PC-9 (cell line): ENCODE measurements at regions of chr6 and their contacts with region 1.

Region 1: GRCh38 chr6:18264219-18264922 is at the start of gene DEK:
- DNase-seq: peak; percentile 56 to 84
- H3K4me3 ChIP-seq: peak within 1 kb of the TSS; percentile 97
- H3K27ac ChIP-seq: peak within 1 kb of the TSS; percentile 73
- H3K4me1 ChIP-seq: peaks cover 41% of the 10 kb centered on the region
- H3K27me3 ChIP-seq: no peaks in the 10 kb centered on the region
- CTCF ChIP-seq: peak; percentile 53; the same call in 1 of the 2 replicates
- total RNA-seq, gene DEK: 192 and 260 TPM in 2 replicates

Region 2: DNA sequence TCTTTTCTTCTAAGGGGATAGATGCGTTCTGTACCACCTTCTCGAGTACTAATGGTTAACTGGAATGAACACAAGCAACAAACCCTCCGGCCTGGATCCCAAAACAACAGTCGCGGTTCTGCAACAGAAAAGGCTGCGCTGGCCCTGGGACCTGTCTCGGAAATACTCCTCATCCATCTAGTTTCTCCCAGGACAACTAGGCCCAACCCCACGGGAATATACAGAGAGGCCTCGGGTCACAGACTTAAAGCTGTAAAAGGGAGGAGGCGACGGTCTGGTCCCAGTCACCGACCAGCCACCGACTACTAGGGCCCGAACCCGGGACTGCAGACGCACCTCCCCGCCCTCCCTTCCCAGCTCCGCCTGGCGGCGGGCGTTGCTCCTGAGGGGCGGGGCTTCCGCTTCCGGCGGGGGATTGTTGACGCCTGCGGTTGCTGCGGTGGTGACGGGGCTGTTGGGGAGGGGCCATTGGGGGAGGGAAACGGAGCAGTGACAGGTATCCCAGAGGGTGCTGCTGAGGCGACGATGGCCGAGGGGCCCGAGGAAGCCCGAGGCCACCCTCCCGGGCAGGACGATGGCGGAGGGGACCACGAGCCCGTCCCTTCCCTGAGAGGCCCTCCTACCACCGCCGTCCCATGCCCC is 664.4 kb before region 1 on chr6 and contains the start of gene FAM8A1:
- CTCF ChIA-PET with region 1: no interaction called
- POLR2A ChIA-PET with region 1: interaction called, 10 read pairs
- intact Hi-C with region 1: no loop called
- DNase-seq: peak; percentile 76 to 95
- H3K4me3 ChIP-seq: peak within 1 kb of the TSS; percentile 80
- H3K27ac ChIP-seq: no peak within 1 kb of the TSS
- H3K4me1 ChIP-seq: peaks cover 11% of the 10 kb centered on the region; the same call in 1 of the 2 replicates
- H3K27me3 ChIP-seq: no peaks in the 10 kb centered on the region
- CTCF ChIP-seq: no peak; the same call in 1 of the 2 replicates
- total RNA-seq, gene FAM8A1: 8.1 and 11.9 TPM in 2 replicates

Region 3: GRCh38 chr6:18302561-18303439 is 38.4 kb after region 1 on chr6:
- CTCF ChIA-PET with region 1: no interaction called
- POLR2A ChIA-PET with region 1: no interaction called
- intact Hi-C with region 1: loop called (anchors 2 kb)
- DNase-seq: no peak
- H3K4me3 ChIP-seq: no peak overlapping the region
- H3K27ac ChIP-seq: no peak overlapping the region
- H3K4me1 ChIP-seq: no peaks in the 10 kb centered on the region; the same call in 1 of the 2 replicates
- H3K27me3 ChIP-seq: no peaks in the 10 kb centered on the region
- CTCF ChIP-seq: no peak; the same call in 1 of the 2 replicates

Region 4: GRCh38 chr6:18387061-18387721 is 122.8 kb after region 1 on chr6 and contains the start of gene RNF144B:
- CTCF ChIA-PET with region 1: no interaction called
- POLR2A ChIA-PET with region 1: interaction called, 16 read pairs
- intact Hi-C with region 1: loop called (anchors 1 kb)
- DNase-seq: peak; percentile 87 to 89
- H3K4me3 ChIP-seq: peak within 1 kb of the TSS; percentile 80
- H3K27ac ChIP-seq: peak within 1 kb of the TSS; percentile 76
- H3K4me1 ChIP-seq: peaks cover 39% of the 10 kb centered on the region
- H3K27me3 ChIP-seq: no peaks in the 10 kb centered on the region
- CTCF ChIP-seq: no peak
- total RNA-seq, gene RNF144B: 26.2 and 34.5 TPM in 2 replicates

Region 5: GRCh38 chr6:18491308-18492045 is 227.1 kb after region 1 on chr6:
- CTCF ChIA-PET with region 1: no interaction called
- POLR2A ChIA-PET with region 1: no interaction called
- intact Hi-C with region 1: loop called (anchors 2 kb)
- DNase-seq: peak; percentile 33 to 76
- H3K4me3 ChIP-seq: no peak overlapping the region
- H3K27ac ChIP-seq: no peak overlapping the region
- H3K4me1 ChIP-seq: peaks cover 42% of the 10 kb centered on the region
- H3K27me3 ChIP-seq: no peaks in the 10 kb centered on the region
- CTCF ChIP-seq: no peak

Region 6: GRCh38 chr6:18509871-18510643 is 245.7 kb after region 1 on chr6:
- CTCF ChIA-PET with region 1: no interaction called
- POLR2A ChIA-PET with region 1: no interaction called
- intact Hi-C with region 1: no loop called
- DNase-seq: no peak
- H3K4me3 ChIP-seq: no peak overlapping the region
- H3K27ac ChIP-seq: no peak overlapping the region
- H3K4me1 ChIP-seq: no peaks in the 10 kb centered on the region
- H3K27me3 ChIP-seq: no peaks in the 10 kb centered on the region
- CTCF ChIP-seq: no peak